Esophagus muscularis mucosa (tissue), 4 donors: ENCODE measurements at regions of chr5 and their contacts with region 1.

Region 1: GRCh38 chr5:134708301-134708700 is 30.0 kb upstream of the CAMLG start:
- DNase-seq: no peak
- H3K4me3 ChIP-seq: no peak overlapping the region
- H3K27ac ChIP-seq: no peak overlapping the region
- H3K4me1 ChIP-seq: no peaks in the 10 kb centered on the region
- H3K27me3 ChIP-seq: no peaks in the 10 kb centered on the region
- CTCF ChIP-seq: no peak
- EP300 ChIP-seq: no peak
- POLR2A ChIP-seq: no peak

Region 2: DNA sequence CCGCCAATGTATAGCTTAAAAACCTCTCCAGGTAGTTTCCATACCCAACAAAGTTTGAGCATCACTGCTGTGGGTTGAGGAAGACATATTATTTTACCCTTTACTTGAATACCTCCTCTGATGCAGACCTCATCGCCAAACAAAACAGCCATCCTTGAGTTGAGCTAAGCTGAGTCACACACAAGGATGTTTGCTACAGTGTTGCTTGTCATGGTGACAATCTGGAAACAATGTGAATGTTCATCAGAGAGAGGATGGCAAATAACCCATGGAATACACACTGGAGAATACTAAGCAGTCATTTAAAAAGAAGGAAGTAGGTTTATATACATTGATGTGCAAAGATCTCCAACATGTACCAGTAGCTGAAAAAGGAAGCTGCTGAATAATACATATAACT is 634.9 kb before region 1 on chr5:
- intact Hi-C with region 1: no loop called
- DNase-seq: no peak
- H3K4me3 ChIP-seq: no peak overlapping the region
- H3K27ac ChIP-seq: no peak overlapping the region
- H3K4me1 ChIP-seq: peaks cover 7 to 17% (median 8%) of the 10 kb centered on the region in 4 donors
- H3K27me3 ChIP-seq: peaks cover 0 to 29% (median 0%) of the 10 kb centered on the region in 4 donors
- CTCF ChIP-seq: no peak
- EP300 ChIP-seq: no peak
- POLR2A ChIP-seq: no peak

Region 3: DNA sequence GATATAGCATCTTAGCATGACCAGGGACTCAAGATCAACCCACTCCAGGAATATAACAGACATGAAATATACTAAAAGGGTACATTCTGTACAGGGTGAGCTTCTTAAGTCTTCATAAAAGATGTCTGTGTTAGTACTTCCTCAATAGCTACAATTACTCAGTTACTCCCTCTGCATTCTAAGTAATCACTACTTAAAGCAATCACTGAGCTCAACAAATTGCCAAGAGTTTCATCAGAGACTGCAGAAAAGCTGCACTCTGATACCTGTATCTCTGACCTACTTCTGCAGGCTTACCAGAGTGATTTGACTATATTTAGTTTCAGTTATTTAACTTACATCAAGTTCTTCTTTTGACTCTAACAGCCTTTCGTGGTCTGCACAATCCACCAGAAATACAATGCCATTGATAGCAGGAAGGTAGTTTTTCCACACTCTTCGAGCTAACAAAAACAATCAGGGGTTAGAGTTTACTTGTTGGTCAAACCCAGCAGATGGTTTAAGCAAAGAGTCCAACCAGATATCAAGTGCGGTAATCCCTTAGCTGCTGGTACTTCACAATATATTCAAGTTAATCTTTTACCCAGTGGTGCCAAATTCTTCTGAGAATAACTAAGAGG is 99.0 kb before region 1 on chr5:
- intact Hi-C with region 1: loop called (anchors 10 kb)
- DNase-seq: no peak
- H3K4me3 ChIP-seq: no peak overlapping the region
- H3K27ac ChIP-seq: no peak overlapping the region
- H3K4me1 ChIP-seq: no peaks in the 10 kb centered on the region
- H3K27me3 ChIP-seq: no peaks in the 10 kb centered on the region
- CTCF ChIP-seq: no peak
- EP300 ChIP-seq: no peak
- POLR2A ChIP-seq: no peak